ENCODE measurements at regions of chr4 and their contacts with region 1.

Region 1: GRCh38 chr4:26410385-26411293 is 79.6 kb downstream of the CCKAR start:
- DNase-seq: peak; percentile 49
- H3K4me3 ChIP-seq: no peak overlapping the region
- H3K27ac ChIP-seq: no peak overlapping the region
- H3K4me1 ChIP-seq: no peaks in the 10 kb centered on the region
- H3K27me3 ChIP-seq: no peaks in the 10 kb centered on the region
- CTCF ChIP-seq: peak; percentile 49

Region 2: GRCh38 chr4:26028793-26029567 is 381.7 kb before region 1 on chr4:
- intact Hi-C with region 1: loop called (anchors 5 kb)
- DNase-seq: peak; percentile 63
- H3K4me3 ChIP-seq: no peak overlapping the region
- H3K27ac ChIP-seq: no peak overlapping the region
- H3K4me1 ChIP-seq: peaks cover 5% of the 10 kb centered on the region
- H3K27me3 ChIP-seq: no peaks in the 10 kb centered on the region
- CTCF ChIP-seq: peak; percentile 63

Region 3: GRCh38 chr4:26076000-26076587 is 334.5 kb before region 1 on chr4:
- intact Hi-C with region 1: loop called (anchors 10 kb)
- DNase-seq: no peak
- H3K4me3 ChIP-seq: no peak overlapping the region
- H3K27ac ChIP-seq: peak overlapping the region; percentile 34
- H3K4me1 ChIP-seq: no peaks in the 10 kb centered on the region
- H3K27me3 ChIP-seq: no peaks in the 10 kb centered on the region
- CTCF ChIP-seq: no peak

Region 4: DNA sequence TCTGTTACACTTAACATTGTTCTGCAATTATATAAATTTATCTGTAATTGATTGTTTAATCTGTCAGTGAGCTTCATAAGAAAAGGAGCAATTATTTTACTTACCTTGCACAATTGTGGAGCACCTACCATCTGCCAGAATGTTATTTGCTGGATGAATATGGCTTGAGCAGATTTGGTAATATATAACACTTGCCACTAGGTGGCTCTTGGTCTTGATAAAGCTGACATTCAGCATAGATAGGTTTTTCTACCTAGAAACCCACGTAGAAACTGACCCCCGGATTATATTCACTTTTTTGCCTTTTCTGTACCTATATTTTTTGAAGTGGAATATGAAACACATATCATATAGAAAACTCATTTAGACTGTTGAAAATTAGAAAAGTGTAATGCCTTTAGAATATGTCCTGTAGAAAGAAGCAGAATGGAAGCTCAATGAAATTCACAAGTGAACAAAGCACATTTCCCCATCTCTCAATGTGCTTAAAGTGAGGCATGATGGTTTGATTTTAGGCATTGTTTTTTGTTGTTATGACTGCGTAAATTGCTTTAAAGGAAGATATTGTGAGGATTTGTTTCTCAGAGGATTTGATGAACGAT is 80.4 kb before region 1 on chr4:
- intact Hi-C with region 1: loop called (anchors 2 kb)
- DNase-seq: peak; percentile 25
- H3K4me3 ChIP-seq: no peak overlapping the region
- H3K27ac ChIP-seq: no peak overlapping the region
- H3K4me1 ChIP-seq: peaks cover 4% of the 10 kb centered on the region
- H3K27me3 ChIP-seq: no peaks in the 10 kb centered on the region
- CTCF ChIP-seq: no peak

Region 5: DNA sequence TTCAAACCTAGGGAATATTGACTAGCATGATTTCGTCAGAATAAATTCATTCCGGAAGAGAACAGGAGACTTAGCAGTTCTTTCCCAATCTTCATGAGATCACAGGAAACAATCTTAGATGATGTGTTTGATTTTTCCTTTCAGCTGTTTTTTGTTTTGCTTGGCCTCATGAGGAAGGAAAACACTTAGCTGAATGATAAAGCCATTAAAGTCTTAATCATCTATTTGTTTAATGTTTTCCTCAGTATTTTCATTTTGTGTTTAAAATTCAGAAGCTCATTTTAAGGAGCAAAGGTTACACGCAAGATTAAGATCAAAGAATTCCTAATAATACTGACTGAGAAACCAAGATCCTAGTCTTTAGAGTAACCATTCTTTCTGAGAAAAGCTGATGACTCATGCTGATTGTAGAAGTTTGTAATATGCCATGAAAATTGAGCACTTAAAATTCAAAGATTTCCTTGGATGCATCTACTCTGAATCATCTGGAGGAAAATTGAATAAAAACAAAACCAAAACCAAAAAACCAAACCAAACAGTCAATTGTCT is 157.9 kb after region 1 on chr4:
- intact Hi-C with region 1: no loop called
- DNase-seq: no peak
- H3K4me3 ChIP-seq: no peak overlapping the region
- H3K27ac ChIP-seq: no peak overlapping the region
- H3K4me1 ChIP-seq: no peaks in the 10 kb centered on the region
- H3K27me3 ChIP-seq: no peaks in the 10 kb centered on the region
- CTCF ChIP-seq: no peak

Measured in colonic mucosa (tissue), 4 donors.